ENCODE measurements at regions of chr11 and their contacts with region 1.

Region 1: DNA sequence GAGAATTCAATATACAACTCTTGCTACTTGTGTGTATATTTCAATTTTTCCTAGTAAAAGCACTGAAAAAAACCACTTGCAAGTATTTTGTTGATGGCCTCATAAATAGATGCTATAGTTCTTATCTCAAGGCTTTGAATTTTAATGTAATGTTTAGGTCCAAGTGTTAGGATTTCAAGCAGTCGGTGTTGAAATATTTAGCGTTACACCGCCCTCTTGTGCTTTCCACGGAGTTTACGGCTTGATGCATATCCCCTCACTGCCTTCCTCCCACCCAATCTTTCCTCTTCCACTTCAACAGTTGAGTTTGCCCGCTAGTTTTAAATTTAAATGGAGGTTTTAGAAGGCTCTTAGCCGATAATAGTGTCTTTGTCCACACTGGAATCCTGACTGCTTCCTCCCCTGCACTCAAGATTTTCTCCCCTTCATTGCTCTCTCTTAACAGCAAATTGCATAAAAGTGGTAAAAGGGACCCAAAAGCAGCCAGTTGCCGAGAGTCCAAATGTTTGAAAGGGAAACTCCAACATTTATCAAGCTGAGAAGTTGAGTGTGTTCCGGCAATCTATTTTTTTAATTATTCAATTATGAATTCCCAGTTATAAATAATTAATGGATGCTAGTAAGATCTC is 25.9 kb upstream of the HTATIP2 start:
- DNase-seq: no peak
- ATAC-seq: peak; percentile 80
- H3K4me3 ChIP-seq: no peak overlapping the region
- H3K27ac ChIP-seq: no peak overlapping the region
- H3K4me1 ChIP-seq: no peaks in the 10 kb centered on the region
- H3K27me3 ChIP-seq: peaks cover 0 to 3% of the 10 kb centered on the region in 2 experiments; a peak in 3 of 4 replicates
- CTCF ChIP-seq: peak; percentile 37 to 68 (median 47); a peak in 5 of 6 replicates
- EP300 ChIP-seq: no peak
- POLR2A ChIP-seq: no peak
- RAD21 ChIP-seq: peak; percentile 61

Region 2: GRCh38 chr11:19938169-19938856 is 399.3 kb before region 1 on chr11:
- CTCF ChIA-PET with region 1: no interaction called
- POLR2A ChIA-PET with region 1: no interaction called
- RAD21 ChIA-PET with region 1: no interaction called
- SMC1A ChIA-PET with region 1: no interaction called
- in situ Hi-C with region 1: no loop called
- intact Hi-C with region 1: loop called (anchors 5 kb)
- DNase-seq: no peak
- ATAC-seq: peak; percentile 87
- H3K4me3 ChIP-seq: no peak overlapping the region
- H3K27ac ChIP-seq: no peak overlapping the region
- H3K4me1 ChIP-seq: peaks cover 4% of the 10 kb centered on the region; the same call in 1 of the 2 replicates
- H3K27me3 ChIP-seq: no peaks in the 10 kb centered on the region
- CTCF ChIP-seq: peak; percentile 64 to 93 (median 83)
- EP300 ChIP-seq: no peak
- POLR2A ChIP-seq: no peak
- RAD21 ChIP-seq: peak; percentile 53

Region 3: DNA sequence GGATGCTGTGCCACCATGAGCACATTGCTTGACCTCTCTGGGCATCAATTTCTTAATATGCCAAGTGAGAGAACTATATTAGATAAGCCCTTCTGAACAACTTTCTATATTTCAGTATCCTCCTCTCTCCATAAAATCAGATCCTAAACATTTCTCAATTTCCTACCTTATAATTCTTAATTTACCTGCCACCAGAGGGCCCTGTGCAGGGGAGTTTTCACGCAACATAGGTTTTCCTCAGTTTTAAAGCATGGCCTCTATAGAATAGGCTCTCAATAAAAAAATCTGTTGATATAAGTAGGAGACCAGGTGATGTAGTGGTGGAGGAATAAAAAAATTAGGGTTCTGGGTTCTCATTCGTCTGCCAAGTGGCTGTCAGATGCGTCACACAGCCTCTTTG is 93.7 kb before region 1 on chr11:
- CTCF ChIA-PET with region 1: interaction called, 9 read pairs
- POLR2A ChIA-PET with region 1: no interaction called
- RAD21 ChIA-PET with region 1: no interaction called
- SMC1A ChIA-PET with region 1: interaction called, 3 read pairs
- in situ Hi-C with region 1: no loop called
- intact Hi-C with region 1: loop called (anchors 2 kb)
- DNase-seq: no peak
- ATAC-seq: no peak
- H3K4me3 ChIP-seq: no peak overlapping the region
- H3K27ac ChIP-seq: no peak overlapping the region
- H3K4me1 ChIP-seq: no peaks in the 10 kb centered on the region
- H3K27me3 ChIP-seq: peaks cover 0 to 3% of the 10 kb centered on the region in 2 experiments; a peak in 1 of 4 replicates
- CTCF ChIP-seq: peak in 2 of 3 experiments; percentile 23 to 29; a peak in 4 of 6 replicates
- EP300 ChIP-seq: no peak
- POLR2A ChIP-seq: no peak
- RAD21 ChIP-seq: peak; percentile 31; the same call in 1 of the 2 replicates

Region 4: GRCh38 chr11:20355221-20356219 is 17.9 kb after region 1 on chr11:
- CTCF ChIA-PET with region 1: interaction called, 15 read pairs
- POLR2A ChIA-PET with region 1: interaction called, 3 read pairs
- RAD21 ChIA-PET with region 1: no interaction called
- SMC1A ChIA-PET with region 1: interaction called, 4 read pairs
- in situ Hi-C with region 1: no loop called
- intact Hi-C with region 1: no loop called
- DNase-seq: no peak
- ATAC-seq: peak; percentile 95
- H3K4me3 ChIP-seq: no peak overlapping the region
- H3K27ac ChIP-seq: no peak overlapping the region
- H3K4me1 ChIP-seq: no peaks in the 10 kb centered on the region
- H3K27me3 ChIP-seq: no peaks in the 10 kb centered on the region
- CTCF ChIP-seq: peak; percentile 45 to 57 (median 50)
- EP300 ChIP-seq: no peak
- POLR2A ChIP-seq: no peak
- RAD21 ChIP-seq: peak; percentile 27; the same call in 1 of the 2 replicates

Region 5: DNA sequence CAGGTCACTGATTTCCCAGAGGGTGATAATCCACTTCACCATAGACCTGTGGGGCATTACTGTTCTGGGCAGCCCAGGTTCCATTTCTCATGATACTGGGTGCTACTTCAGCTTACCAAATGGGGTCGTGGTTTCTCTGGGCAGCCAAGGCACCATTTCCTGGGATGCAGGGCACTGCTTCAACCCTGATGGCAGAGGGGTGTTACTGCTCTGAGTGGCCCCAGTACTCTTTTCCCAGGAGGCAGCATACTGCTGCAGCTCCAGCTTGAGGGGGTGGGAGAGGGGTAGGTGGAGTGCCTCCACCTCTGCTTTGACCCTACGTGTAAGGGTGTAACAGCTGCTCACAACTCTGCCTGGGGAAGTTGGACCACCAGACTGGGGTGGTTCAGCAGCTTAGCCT is 101.0 kb after region 1 on chr11:
- CTCF ChIA-PET with region 1: no interaction called
- POLR2A ChIA-PET with region 1: no interaction called
- RAD21 ChIA-PET with region 1: no interaction called
- SMC1A ChIA-PET with region 1: no interaction called
- in situ Hi-C with region 1: no loop called
- intact Hi-C with region 1: no loop called
- DNase-seq: no peak
- ATAC-seq: no peak; the same call in 2 of the 3 replicates
- H3K4me3 ChIP-seq: no peak overlapping the region
- H3K27ac ChIP-seq: no peak overlapping the region
- H3K4me1 ChIP-seq: no peaks in the 10 kb centered on the region
- H3K27me3 ChIP-seq: no peaks in the 10 kb centered on the region
- CTCF ChIP-seq: no peak
- EP300 ChIP-seq: no peak
- POLR2A ChIP-seq: no peak
- RAD21 ChIP-seq: no peak